Endothelial cell of umbilical vein (primary cell): ENCODE measurements at regions of chr17 and their contacts with region 1.

Region 1: DNA sequence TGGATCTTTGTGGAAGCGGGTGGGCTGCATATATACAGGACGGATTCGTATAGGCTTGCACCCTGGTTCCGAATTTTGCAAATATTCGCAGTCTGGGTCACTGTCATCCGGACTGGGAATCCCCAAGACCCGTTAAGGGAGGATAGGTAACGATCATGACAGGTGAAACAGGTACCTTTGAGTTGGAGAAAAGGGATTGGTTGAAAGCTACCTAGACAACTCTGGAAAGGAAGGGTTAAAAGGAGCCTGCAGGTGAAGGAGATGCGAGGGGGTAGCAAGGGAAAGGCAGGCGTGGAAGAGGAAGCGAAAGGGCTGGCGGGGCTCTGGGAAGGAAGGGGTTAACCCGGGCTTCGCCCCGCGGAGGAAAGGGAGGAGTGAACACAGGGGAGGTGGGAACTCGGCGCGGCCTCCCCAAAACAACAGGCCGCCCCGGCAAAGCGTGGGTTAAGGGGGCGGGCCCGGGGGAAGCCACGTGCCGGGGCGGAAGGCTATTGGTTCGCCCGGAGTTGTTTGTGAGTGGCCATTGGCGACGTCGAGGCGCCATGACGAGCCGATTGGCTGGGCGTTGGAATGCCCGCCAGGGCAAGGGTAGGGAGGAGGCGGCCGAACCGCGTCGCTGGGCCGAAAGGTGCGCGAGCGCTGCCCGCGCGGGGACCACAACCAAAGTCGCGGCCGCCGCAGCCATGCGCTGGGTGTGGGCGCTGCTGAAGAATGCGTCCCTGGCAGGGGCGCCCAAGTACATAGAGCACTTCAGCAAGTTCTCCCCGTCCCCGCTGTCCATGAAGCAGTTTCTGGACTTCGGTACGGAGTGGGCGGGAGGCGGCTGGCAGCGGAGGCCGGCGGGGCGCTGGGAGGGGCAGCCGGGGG is at the start of gene PDK2:
- DNase-seq: peak; percentile 94
- H3K4me3 ChIP-seq: peak within 1 kb of the TSS; percentile 33 to 85 (median 46)
- H3K27ac ChIP-seq: no peak within 1 kb of the TSS
- H3K4me1 ChIP-seq: peaks cover 10% of the 10 kb centered on the region
- H3K27me3 ChIP-seq: no peaks in the 10 kb centered on the region
- CTCF ChIP-seq: no peak
- POLR2A ChIP-seq: no peak
- total RNA-seq, gene PDK2: 17.4 and 21.3 TPM in 2 replicates

Region 2: GRCh38 chr17:49901460-49902331 is 193.3 kb before region 1 on chr17:
- CTCF ChIA-PET with region 1: no interaction called
- POLR2A ChIA-PET with region 1: no interaction called
- dilution Hi-C with region 1: no loop called
- intact Hi-C with region 1: no loop called
- DNase-seq: no peak
- H3K4me3 ChIP-seq: no peak overlapping the region
- H3K27ac ChIP-seq: no peak overlapping the region
- H3K4me1 ChIP-seq: no peaks in the 10 kb centered on the region
- H3K27me3 ChIP-seq: peaks cover 55% of the 10 kb centered on the region in 2 experiments
- CTCF ChIP-seq: no peak
- POLR2A ChIP-seq: no peak

Region 3: GRCh38 chr17:50037321-50038071 is 57.5 kb before region 1 on chr17:
- CTCF ChIA-PET with region 1: interaction called, 16 read pairs
- POLR2A ChIA-PET with region 1: no interaction called
- dilution Hi-C with region 1: no loop called
- intact Hi-C with region 1: no loop called
- DNase-seq: no peak
- H3K4me3 ChIP-seq: no peak overlapping the region
- H3K27ac ChIP-seq: no peak overlapping the region
- H3K4me1 ChIP-seq: no peaks in the 10 kb centered on the region
- H3K27me3 ChIP-seq: no peaks in the 10 kb centered on the region
- CTCF ChIP-seq: no peak
- POLR2A ChIP-seq: no peak

Region 4: DNA sequence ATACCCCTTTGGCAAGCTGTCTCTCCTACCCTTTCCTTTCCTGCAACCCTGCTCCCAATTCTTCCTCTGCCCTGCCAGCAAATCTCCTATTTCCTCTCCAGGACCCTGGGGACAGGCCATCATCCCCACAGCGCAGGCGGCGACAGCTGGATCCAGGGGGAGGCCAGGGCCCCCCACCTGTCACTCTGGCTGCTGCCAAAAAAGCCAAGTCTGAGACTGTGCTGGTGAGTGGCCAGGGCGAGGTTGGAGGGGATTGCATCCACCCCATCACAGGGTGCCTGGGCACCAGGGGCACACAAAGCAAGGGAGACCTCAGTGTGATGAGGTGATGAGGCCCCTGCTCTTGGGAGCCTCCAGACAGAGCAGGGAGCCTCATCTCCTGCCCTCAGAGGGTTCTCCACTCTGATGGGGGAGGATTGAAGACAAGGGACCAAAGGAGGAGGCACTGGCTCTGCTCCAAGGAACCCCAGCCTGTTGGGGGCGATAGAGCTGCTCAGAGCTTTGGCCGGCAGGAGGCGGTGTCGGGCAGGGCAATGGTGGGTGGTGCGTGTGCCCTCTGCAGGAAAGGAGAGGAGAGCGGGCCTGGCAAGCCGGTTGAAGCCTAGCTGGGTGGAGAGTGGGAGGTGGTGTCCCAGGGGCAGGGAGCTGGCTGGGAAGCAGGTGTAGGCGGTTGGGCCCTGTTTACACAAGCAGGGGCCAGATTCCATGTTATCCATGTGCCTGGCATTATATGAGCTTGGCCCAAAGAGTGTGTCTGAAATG is 15.5 kb before region 1 on chr17:
- CTCF ChIA-PET with region 1: interaction called, 44 read pairs
- POLR2A ChIA-PET with region 1: no interaction called
- dilution Hi-C with region 1: no loop called
- intact Hi-C with region 1: no loop called
- DNase-seq: peak; percentile 17
- H3K4me3 ChIP-seq: no peak overlapping the region
- H3K27ac ChIP-seq: no peak overlapping the region
- H3K4me1 ChIP-seq: no peaks in the 10 kb centered on the region
- H3K27me3 ChIP-seq: no peaks in the 10 kb centered on the region
- CTCF ChIP-seq: peak; percentile 64 to 71
- POLR2A ChIP-seq: no peak

Region 5: GRCh38 chr17:50129728-50130558 is 35.0 kb after region 1 on chr17 and contains the start of gene SAMD14:
- CTCF ChIA-PET with region 1: interaction called, 15 read pairs
- POLR2A ChIA-PET with region 1: no interaction called
- dilution Hi-C with region 1: no loop called
- intact Hi-C with region 1: loop called (anchors 1 kb)
- DNase-seq: peak; percentile 53
- H3K4me3 ChIP-seq: peak within 1 kb of the TSS; percentile 22 to 53 (median 31)
- H3K27ac ChIP-seq: peak within 1 kb of the TSS; percentile 56
- H3K4me1 ChIP-seq: peaks cover 21% of the 10 kb centered on the region
- H3K27me3 ChIP-seq: no peaks in the 10 kb centered on the region
- CTCF ChIP-seq: no peak
- POLR2A ChIP-seq: no peak
- total RNA-seq, gene SAMD14: 15.6 and 16.1 TPM in 2 replicates

Region 6: DNA sequence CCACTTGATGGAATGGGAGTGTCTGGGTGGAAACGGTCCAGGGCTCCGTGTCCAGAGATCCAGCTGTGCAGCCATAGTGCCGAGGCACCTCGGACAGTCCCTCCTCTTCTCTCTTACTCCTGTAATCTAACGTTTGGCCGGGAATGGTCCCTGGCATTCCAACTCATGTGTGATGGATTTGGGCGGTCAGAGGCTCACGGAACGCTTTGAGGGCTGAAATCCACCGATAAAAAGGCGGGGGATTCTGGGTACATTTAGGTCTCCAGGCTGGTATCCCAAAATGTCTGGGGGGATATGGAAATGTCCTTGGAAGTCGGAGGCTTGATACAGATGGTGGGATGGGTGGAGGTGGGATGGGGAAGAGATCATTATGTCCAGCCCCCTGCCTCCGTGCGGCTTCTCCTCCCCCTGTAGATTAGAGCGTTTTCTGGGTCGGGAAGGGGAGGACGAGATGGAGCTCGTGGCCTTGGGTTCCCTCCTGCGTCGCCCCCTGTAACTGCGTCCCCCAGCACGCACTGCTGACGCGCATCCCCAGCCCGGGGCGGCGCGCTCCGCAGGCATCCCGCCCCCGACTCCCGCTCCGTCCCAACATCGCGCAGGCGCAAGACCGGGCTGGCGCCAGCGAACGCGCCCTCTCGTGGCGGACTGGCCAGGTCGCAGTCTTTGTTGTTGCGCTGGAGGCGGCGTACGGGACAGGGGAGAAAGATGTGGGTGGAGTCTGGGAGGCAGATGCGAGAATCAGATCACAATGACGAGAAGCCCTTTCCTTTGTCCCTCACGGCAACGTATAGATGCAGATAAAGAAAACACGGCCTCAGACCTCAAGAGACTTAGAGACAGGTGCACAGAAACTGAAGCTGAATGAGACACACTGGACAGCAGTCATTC is 66.3 kb after region 1 on chr17:
- CTCF ChIA-PET with region 1: interaction called, 32 read pairs
- POLR2A ChIA-PET with region 1: no interaction called
- dilution Hi-C with region 1: no loop called
- intact Hi-C with region 1: loop called (anchors 1 kb)
- DNase-seq: peak; percentile 93
- H3K4me3 ChIP-seq: peak overlapping the region; percentile 28 to 63 (median 39)
- H3K27ac ChIP-seq: no peak overlapping the region
- H3K4me1 ChIP-seq: peaks cover 6% of the 10 kb centered on the region
- H3K27me3 ChIP-seq: peaks cover 0 to 2% of the 10 kb centered on the region in 2 experiments
- CTCF ChIP-seq: peak; percentile 95 to 97
- POLR2A ChIP-seq: peak; percentile 22

Region 7: DNA sequence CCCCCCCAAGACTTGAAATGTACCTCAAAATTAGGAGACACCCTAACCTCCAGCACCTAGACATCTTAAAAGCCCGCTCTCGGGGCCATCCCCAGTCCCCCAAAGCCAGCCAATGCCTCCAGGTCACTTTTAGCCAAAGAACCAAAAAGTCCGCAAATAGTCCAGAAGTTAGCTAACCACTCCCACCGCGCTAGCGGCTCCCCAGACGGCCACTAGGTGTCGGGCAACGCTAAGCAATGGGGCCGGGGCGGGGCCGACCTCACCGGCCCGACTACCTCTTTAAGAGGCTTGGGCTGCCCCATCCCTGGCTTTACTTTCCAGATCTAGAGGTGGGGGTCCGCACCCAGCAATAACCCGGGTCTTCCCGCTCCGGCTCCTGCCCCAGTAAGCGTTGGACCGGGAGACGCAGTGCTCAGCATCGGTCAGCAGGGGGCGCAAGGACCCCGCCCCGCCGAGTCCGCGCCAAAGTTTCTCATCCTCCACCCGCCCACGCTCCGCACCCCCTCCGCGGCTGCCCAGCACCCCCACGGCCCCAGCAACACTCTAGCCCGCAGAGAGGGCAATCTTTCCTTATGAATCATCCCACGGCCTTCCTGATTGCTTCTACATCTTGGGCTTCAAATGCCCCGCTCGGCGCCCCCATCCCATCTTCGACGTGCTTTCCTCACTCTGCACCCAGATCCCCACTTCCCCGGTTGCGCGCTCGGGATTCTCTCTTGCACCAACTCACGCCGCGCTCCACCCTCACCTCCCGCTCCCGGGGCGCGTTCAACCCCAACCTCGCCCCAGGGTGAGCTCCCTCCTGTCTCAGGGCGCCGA is 105.7 kb after region 1 on chr17:
- CTCF ChIA-PET with region 1: interaction called, 10 read pairs
- POLR2A ChIA-PET with region 1: no interaction called
- dilution Hi-C with region 1: no loop called
- intact Hi-C with region 1: no loop called
- DNase-seq: peak; percentile 68
- H3K4me3 ChIP-seq: peak overlapping the region in 2 of 3 experiments; percentile 13 to 18
- H3K27ac ChIP-seq: no peak overlapping the region
- H3K4me1 ChIP-seq: no peaks in the 10 kb centered on the region
- H3K27me3 ChIP-seq: peaks cover 13 to 24% of the 10 kb centered on the region in 2 experiments
- CTCF ChIP-seq: peak; percentile 95 to 100
- POLR2A ChIP-seq: no peak